ENCODE measurements at regions of chr6 and their contacts with region 1.

Region 1: GRCh38 chr6:64012351-64013001 is 376.9 kb downstream of the PHF3 start:
- DNase-seq: peak; percentile 44
- H3K4me3 Mint-ChIP-seq: no peak overlapping the region
- H3K27ac Mint-ChIP-seq: no peak overlapping the region
- H3K4me1 Mint-ChIP-seq: no peaks in the 10 kb centered on the region
- H3K27me3 Mint-ChIP-seq: peaks cover 15% of the 10 kb centered on the region
- CTCF ChIP-seq: peak; percentile 54

Region 2: DNA sequence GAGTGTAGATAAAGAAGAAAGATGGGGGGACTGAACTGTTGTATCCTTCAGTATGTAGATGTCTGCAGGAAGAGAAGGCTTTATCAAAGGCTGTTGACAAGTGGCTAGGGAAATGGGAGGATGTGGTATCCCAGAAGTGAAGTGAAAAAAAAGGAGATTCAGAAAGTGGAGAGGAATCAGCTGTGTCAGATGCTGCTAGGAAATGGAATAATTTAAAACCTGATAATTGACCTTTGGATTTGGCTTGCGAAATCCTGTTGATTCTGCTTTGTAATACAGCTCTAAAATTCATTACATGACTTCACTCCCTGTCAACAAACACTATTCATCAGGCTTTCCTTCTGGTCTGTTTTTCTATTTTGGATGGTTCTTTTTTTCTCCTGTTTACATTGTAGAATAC is 335.2 kb before region 1 on chr6:
- CTCF ChIA-PET with region 1: no interaction called
- intact Hi-C with region 1: no loop called
- DNase-seq: no peak
- H3K4me3 Mint-ChIP-seq: no peak overlapping the region
- H3K27ac Mint-ChIP-seq: no peak overlapping the region
- H3K4me1 Mint-ChIP-seq: peaks cover 9% of the 10 kb centered on the region
- H3K27me3 Mint-ChIP-seq: no peaks in the 10 kb centered on the region
- CTCF ChIP-seq: no peak

Region 3: DNA sequence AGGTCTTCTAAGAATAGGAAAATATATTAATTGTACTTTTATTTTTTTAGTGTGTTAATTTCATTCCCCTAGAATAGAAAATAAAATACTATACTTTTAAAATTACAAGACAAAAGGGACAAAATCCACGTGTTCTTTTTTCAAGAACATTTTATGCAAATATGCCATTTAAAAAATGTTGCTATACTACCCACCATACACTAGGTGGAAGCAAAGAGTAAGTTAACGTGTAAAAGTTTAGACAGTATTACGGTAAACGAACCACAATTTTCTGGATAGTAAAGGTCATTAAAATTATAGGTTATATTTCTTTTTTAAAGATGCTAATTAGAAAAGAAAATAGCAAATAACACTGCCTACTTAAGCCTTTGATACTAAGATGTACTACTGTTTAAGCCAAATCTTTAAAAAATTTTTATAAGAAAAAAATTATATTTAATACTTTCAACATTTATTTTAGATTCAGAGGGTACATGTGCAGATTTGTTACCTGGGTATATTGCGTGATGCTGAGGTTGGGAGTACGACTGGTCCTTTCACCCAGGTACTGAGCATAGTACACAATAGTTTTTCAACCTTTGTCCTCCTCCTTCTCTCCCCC is 89.2 kb before region 1 on chr6:
- CTCF ChIA-PET with region 1: no interaction called
- intact Hi-C with region 1: loop called (anchors 5 kb)
- DNase-seq: no peak
- H3K4me3 Mint-ChIP-seq: no peak overlapping the region
- H3K27ac Mint-ChIP-seq: no peak overlapping the region
- H3K4me1 Mint-ChIP-seq: no peaks in the 10 kb centered on the region
- H3K27me3 Mint-ChIP-seq: peaks cover 36% of the 10 kb centered on the region
- CTCF ChIP-seq: peak; percentile 42

Region 4: DNA sequence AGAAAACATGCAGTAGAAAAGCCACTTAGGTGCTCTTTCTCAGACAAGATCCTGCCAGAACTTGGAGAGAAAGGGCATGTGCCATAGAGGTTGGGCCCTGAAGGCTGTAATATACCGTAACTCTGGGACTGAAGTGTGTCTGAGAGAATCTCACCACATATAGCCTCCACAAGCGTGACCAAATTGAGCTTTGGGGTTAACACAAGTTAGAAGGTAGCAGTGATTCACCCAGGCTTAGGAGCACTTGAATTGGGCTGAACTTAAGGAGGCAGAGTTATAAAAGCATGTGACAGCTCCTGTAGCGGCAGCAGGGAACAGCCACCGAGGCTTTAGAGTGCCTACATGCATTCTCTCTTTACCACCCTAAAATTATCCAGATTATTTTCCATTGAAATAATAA is 15.3 kb before region 1 on chr6:
- CTCF ChIA-PET with region 1: no interaction called
- intact Hi-C with region 1: no loop called
- DNase-seq: no peak
- H3K4me3 Mint-ChIP-seq: no peak overlapping the region
- H3K27ac Mint-ChIP-seq: no peak overlapping the region
- H3K4me1 Mint-ChIP-seq: no peaks in the 10 kb centered on the region
- H3K27me3 Mint-ChIP-seq: no peaks in the 10 kb centered on the region
- CTCF ChIP-seq: no peak

Region 5: GRCh38 chr6:65646544-65646943 is 1634.1 kb after region 1 on chr6:
- CTCF ChIA-PET with region 1: no interaction called
- intact Hi-C with region 1: no loop called
- DNase-seq: no peak
- H3K4me3 Mint-ChIP-seq: no peak overlapping the region
- H3K27ac Mint-ChIP-seq: no peak overlapping the region
- H3K4me1 Mint-ChIP-seq: no peaks in the 10 kb centered on the region
- H3K27me3 Mint-ChIP-seq: no peaks in the 10 kb centered on the region
- CTCF ChIP-seq: no peak

Measured in Calu3 (cell line).